H1 (cell line): ENCODE measurements at regions of chr14 and their contacts with region 1.

Region 1: GRCh38 chr14:94428610-94429009 is 24.0 kb downstream of the SERPINA11 start:
- DNase-seq: no peak
- H3K4me3 ChIP-seq: no peak overlapping the region
- H3K27ac ChIP-seq: no peak overlapping the region
- H3K4me1 ChIP-seq: 0 out of 7 replicates have a peak, but pooled peaks cover 0 to 2% (median 0%) of the 10 kb centered on the region in 4 experiments
- H3K27me3 ChIP-seq: no peaks in the 10 kb centered on the region
- CTCF ChIP-seq: no peak
- EP300 ChIP-seq: no peak
- POLR2A ChIP-seq: no peak
- RAD21 ChIP-seq: no peak

Region 2: GRCh38 chr14:94173885-94174603 is 254.6 kb before region 1 on chr14 and contains the start of gene PPP4R4:
- CTCF ChIA-PET with region 1: no interaction called
- POLR2A ChIA-PET with region 1: no interaction called
- DNase-seq: peak; percentile 78 to 95
- H3K4me3 ChIP-seq: peak within 1 kb of the TSS; percentile 67 to 97 (median 86)
- H3K27ac ChIP-seq: 0 out of 2 replicates have a peak within 1 kb of the TSS, but pooled peaks have one; percentile 39
- H3K4me1 ChIP-seq: peaks cover 0 to 6% (median 3%) of the 10 kb centered on the region in 4 experiments; a peak in 5 of 7 replicates
- H3K27me3 ChIP-seq: peaks cover 0 to 4% (median 0%) of the 10 kb centered on the region in 4 experiments; a peak in 2 of 7 replicates
- CTCF ChIP-seq: no peak
- EP300 ChIP-seq: no peak
- POLR2A ChIP-seq: 0 out of 3 replicates have a peak, but pooled peaks of 1 of the 2 experiments have one; percentile 19
- RAD21 ChIP-seq: no peak
- total RNA-seq, gene PPP4R4: 9.4 and 9.6 TPM in 2 replicates

Region 3: GRCh38 chr14:94407906-94408305 is 20.7 kb before region 1 on chr14:
- CTCF ChIA-PET with region 1: interaction called, 10 read pairs
- POLR2A ChIA-PET with region 1: no interaction called
- DNase-seq: no peak
- H3K4me3 ChIP-seq: no peak overlapping the region
- H3K27ac ChIP-seq: no peak overlapping the region
- H3K4me1 ChIP-seq: peaks cover 0 to 7% (median 0%) of the 10 kb centered on the region in 4 experiments; a peak in 1 of 7 replicates
- H3K27me3 ChIP-seq: no peaks in the 10 kb centered on the region
- CTCF ChIP-seq: no peak
- EP300 ChIP-seq: no peak
- POLR2A ChIP-seq: no peak
- RAD21 ChIP-seq: no peak

Region 4: DNA sequence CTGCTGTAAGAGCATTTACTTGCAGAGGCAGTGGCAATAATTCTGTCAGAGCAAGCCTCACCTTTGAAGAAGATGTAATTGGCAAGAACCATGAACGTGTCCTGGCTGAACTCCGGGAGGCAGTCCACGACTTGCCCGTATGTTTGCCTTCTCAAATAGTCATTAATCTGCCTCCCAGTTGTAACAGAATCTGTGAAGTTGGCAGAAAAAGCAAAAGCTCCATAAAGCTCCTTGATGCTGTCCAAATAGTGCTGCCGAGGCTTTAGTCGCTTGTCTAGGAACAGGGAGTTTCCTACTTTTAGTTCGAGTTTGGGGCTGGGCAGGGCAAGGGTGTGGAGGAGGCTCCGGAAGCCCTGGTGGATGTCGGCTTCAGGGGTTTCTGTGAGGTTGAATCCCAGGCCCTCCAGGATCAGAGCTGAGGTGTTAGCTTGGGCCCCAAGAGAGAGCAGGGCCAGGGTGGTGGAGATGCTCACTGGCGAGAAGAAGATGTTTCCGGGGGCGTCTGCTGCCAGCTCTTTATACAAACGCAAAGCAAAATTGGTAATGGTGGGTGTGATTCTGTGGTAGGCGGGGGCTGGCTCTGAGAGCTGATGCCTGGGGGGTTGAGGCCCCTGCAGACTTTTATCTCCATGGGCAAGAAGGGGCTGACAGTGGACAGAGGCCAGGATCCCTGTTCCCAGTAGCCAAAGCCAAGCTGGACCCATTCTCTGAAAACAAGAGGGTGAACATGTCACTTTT is 19.6 kb after region 1 on chr14:
- CTCF ChIA-PET with region 1: interaction called, 17 read pairs
- POLR2A ChIA-PET with region 1: interaction called, 3 read pairs
- DNase-seq: no peak
- H3K4me3 ChIP-seq: no peak overlapping the region
- H3K27ac ChIP-seq: no peak overlapping the region
- H3K4me1 ChIP-seq: peaks cover 10 to 27% (median 19%) of the 10 kb centered on the region in 4 experiments
- H3K27me3 ChIP-seq: no peaks in the 10 kb centered on the region; a peak in 2 of 7 replicates
- CTCF ChIP-seq: no peak
- EP300 ChIP-seq: no peak
- POLR2A ChIP-seq: no peak
- RAD21 ChIP-seq: no peak

Region 5: DNA sequence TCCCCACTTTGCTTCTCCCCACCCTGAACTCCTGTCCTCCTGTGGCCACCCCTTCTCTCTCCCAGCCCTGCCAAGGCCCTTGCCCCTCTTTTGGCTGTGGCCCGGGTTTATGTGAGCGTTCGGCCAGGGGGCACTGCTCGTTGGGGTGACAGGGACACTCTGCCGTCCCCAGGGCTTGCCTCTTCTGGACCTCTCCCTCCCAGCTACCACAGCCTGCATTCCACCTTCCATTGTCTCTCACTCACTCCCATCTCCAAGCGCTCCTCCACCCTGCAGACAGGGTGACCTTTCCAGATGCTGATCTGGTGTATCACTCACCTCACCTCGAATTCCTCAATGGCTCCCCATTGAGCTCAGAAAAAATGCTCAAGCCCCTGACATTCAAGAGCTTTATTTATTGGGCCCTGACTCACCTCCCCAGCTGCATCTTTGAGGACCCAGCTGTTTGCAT is 46.0 kb after region 1 on chr14:
- CTCF ChIA-PET with region 1: interaction called, 18 read pairs
- POLR2A ChIA-PET with region 1: no interaction called
- DNase-seq: peak in 1 of 2 experiments; percentile 27
- H3K4me3 ChIP-seq: no peak overlapping the region
- H3K27ac ChIP-seq: no peak overlapping the region
- H3K4me1 ChIP-seq: peaks cover 0 to 5% (median 1%) of the 10 kb centered on the region in 4 experiments; a peak in 3 of 7 replicates
- H3K27me3 ChIP-seq: no peaks in the 10 kb centered on the region; a peak in 1 of 7 replicates
- CTCF ChIP-seq: no peak
- EP300 ChIP-seq: no peak
- POLR2A ChIP-seq: no peak
- RAD21 ChIP-seq: no peak

Region 6: DNA sequence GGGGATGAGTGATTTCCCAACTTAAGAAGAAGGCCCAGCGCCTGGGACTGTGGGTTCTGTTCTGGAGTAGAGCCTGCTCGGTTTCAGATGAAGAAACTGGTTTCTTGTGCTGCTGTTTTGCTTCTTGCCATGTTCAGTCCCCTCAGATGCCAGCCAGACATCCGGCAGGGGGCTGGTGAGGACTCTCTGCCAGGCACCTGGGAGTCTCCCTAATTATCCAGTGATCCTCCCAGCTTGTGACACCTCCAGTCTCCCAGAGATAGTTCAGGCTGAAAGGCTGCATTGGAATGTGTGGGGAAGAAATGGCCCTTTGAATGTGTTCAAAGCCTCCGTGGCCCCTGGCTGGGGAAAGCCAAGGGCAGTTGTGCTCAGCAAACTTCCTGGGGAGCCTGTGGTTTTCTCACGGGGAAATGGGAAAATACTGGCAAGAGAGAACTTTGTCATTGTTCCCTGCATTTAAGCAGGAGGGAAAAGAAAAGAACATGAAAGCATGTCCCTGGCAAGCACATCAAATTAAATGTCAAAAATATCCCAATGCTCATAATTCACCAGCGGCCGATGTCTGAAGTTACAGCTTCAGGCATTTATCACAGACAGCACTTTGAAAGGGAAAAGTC is 89.1 kb after region 1 on chr14:
- CTCF ChIA-PET with region 1: interaction called, 10 read pairs
- POLR2A ChIA-PET with region 1: no interaction called
- DNase-seq: no peak
- H3K4me3 ChIP-seq: no peak overlapping the region
- H3K27ac ChIP-seq: no peak overlapping the region
- H3K4me1 ChIP-seq: peaks cover 0 to 12% (median 3%) of the 10 kb centered on the region in 4 experiments; a peak in 4 of 7 replicates
- H3K27me3 ChIP-seq: no peaks in the 10 kb centered on the region
- CTCF ChIP-seq: no peak
- EP300 ChIP-seq: no peak
- POLR2A ChIP-seq: no peak
- RAD21 ChIP-seq: no peak